ENCODE measurements at regions of chr17 and their contacts with region 1.

Region 1: DNA sequence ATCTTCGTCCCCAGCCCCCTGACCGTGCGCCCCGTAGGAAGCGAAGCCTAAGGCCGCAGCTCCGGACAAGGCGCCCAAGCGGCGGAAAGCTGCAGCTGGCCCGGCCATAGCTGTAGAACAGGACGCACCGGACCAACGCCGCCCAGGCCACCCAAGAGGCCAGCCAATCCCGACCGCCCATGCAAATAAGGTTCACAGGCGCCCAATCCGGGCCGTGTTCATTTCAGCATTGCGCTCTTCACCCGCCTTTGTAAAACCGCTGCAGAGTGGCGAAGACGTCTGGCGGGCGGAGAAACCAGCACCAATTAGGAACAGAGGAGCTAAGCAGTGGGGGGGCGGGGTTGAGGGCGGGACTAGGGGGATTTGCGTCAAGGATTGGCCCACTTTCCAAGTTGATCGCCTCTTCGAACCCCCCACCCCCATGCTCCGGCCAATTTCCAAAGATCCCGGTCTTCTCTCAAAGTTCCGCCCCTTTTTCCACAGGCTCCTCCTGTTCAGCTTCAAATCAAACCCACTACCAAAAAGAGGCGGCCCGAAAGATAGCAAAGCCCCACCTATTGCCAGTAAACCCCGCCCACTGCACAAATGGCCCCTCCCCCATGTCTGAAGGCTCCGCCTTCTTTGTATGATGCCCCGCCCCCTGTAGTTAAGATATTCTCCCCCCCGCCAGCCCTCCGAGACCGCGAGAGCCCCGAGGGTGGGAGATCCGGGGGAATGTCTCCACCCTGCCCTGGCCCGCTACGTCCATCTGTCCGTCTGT is at the start of gene TMEM256:
- DNase-seq: peak; percentile 98
- ATAC-seq: peak; percentile 95
- H3K4me3 ChIP-seq: peak within 1 kb of the TSS; percentile 76 to 95 (median 80)
- H3K27ac ChIP-seq: peak within 1 kb of the TSS; percentile 99
- H3K4me1 ChIP-seq: peaks cover 18% of the 10 kb centered on the region
- H3K27me3 ChIP-seq: no peaks in the 10 kb centered on the region; a peak in 2 of 5 replicates
- CTCF ChIP-seq: no peak
- EP300 ChIP-seq: peak in 1 of 2 experiments; percentile 34; a peak in 1 of 4 replicates
- POLR2A ChIP-seq: peak; percentile 94
- RAD21 ChIP-seq: no peak; the same call in 1 of the 2 replicates
- total RNA-seq, gene TMEM256: 231 and 246 TPM in 2 replicates

Region 2: DNA sequence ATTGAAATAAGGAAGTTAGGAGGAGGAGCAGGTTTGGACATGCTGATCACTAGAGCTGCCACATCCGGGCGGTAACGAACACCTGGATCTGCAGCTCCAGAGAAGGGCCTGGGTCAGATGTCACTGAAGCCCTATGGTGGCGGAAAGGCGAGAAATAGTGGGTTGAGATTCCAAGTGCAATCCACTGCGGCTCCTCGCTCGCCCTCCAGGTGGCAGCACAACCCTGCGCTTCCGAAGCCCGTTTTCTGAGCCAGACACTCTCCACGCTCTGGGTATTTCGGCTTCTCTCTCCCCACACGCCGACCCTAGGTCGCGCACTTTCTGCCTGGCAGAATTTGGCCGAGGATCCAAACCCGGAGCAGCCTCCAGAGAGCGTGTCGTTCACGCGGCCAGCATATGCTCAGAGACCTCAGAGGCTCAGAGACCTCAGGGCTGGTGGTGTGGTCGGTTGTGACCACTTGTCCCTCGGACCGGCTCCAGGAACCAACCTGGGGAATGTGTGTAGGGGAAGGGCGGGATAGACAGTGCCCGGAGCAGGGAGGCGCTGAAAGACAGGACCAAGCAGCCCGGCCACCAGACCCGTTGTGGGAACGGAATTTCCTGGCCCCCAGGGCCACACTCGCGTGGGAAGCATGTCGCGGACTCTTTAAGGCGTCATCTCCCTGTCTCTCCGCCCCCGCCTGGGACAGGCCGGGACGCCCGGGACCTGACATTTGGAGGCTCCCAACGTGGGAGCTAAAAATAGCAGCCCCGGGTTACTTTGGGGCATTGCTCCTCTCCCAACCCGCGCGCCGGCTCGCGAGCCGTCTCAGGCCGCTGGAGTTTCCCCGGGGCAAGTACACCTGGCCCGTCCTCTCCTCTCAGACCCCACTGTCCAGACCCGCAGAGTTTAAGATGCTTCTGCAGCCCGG is 123.4 kb before region 1 on chr17:
- CTCF ChIA-PET with region 1: no interaction called
- POLR2A ChIA-PET with region 1: interaction called, 13 read pairs
- in situ Hi-C with region 1: no loop called
- intact Hi-C with region 1: no loop called
- DNase-seq: peak; percentile 79
- ATAC-seq: peak; percentile 72
- H3K4me3 ChIP-seq: peak overlapping the region; percentile 23 to 87 (median 31); a peak in 5 of 6 replicates
- H3K27ac ChIP-seq: peak overlapping the region; percentile 59
- H3K4me1 ChIP-seq: peaks cover 38% of the 10 kb centered on the region
- H3K27me3 ChIP-seq: no peaks in the 10 kb centered on the region
- CTCF ChIP-seq: peak; percentile 98
- EP300 ChIP-seq: no peak
- POLR2A ChIP-seq: no peak
- RAD21 ChIP-seq: peak; percentile 99

Region 3: GRCh38 chr17:7380321-7380720 is 23.8 kb before region 1 on chr17:
- CTCF ChIA-PET with region 1: no interaction called
- POLR2A ChIA-PET with region 1: interaction called, 24 read pairs
- in situ Hi-C with region 1: no loop called
- intact Hi-C with region 1: no loop called
- DNase-seq: no peak
- ATAC-seq: peak; percentile 77
- H3K4me3 ChIP-seq: peak overlapping the region; percentile 62 to 83 (median 77)
- H3K27ac ChIP-seq: no peak overlapping the region
- H3K4me1 ChIP-seq: peaks cover 21% of the 10 kb centered on the region
- H3K27me3 ChIP-seq: peaks cover 0 to 7% of the 10 kb centered on the region in 2 experiments; a peak in 1 of 5 replicates
- CTCF ChIP-seq: peak; percentile 36
- EP300 ChIP-seq: no peak
- POLR2A ChIP-seq: no peak
- RAD21 ChIP-seq: no peak

Region 4: DNA sequence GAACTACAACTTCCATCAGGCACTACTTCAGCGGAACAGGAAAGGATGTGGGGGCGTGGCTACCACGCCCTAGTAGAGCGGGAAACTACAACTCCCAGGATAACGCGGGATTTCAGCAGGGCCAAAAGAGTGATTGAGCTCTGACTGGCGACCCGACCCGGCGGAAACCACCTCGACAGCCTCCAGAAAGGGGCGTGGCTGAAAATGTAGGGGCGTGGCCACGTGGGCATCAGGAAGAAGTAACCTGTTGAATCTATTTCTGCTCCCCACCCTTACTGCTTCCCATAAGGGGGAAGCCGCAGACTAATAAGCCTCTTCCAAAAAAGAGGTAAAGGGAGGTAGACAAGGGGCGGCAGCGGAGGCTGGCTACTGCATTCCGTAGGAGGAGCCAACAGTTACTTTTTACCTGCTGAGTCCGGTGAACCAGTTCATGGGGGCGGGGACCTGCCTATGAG is 31.1 kb after region 1 on chr17 and contains the start of gene TMEM102:
- CTCF ChIA-PET with region 1: no interaction called
- POLR2A ChIA-PET with region 1: interaction called, 52 read pairs
- in situ Hi-C with region 1: no loop called
- intact Hi-C with region 1: loop called (anchors 1 kb)
- DNase-seq: peak; percentile 97
- ATAC-seq: peak; percentile 85
- H3K4me3 ChIP-seq: peak within 1 kb of the TSS; percentile 62 to 75 (median 72)
- H3K27ac ChIP-seq: peak within 1 kb of the TSS; percentile 13
- H3K4me1 ChIP-seq: peaks cover 24% of the 10 kb centered on the region
- H3K27me3 ChIP-seq: no peaks in the 10 kb centered on the region; a peak in 1 of 5 replicates
- CTCF ChIP-seq: 0 out of 2 replicates have a peak, but pooled peaks have one; percentile 6
- EP300 ChIP-seq: no peak
- POLR2A ChIP-seq: no peak
- RAD21 ChIP-seq: no peak
- total RNA-seq, gene TMEM102: 2.0 and 3.1 TPM in 2 replicates

Region 5: DNA sequence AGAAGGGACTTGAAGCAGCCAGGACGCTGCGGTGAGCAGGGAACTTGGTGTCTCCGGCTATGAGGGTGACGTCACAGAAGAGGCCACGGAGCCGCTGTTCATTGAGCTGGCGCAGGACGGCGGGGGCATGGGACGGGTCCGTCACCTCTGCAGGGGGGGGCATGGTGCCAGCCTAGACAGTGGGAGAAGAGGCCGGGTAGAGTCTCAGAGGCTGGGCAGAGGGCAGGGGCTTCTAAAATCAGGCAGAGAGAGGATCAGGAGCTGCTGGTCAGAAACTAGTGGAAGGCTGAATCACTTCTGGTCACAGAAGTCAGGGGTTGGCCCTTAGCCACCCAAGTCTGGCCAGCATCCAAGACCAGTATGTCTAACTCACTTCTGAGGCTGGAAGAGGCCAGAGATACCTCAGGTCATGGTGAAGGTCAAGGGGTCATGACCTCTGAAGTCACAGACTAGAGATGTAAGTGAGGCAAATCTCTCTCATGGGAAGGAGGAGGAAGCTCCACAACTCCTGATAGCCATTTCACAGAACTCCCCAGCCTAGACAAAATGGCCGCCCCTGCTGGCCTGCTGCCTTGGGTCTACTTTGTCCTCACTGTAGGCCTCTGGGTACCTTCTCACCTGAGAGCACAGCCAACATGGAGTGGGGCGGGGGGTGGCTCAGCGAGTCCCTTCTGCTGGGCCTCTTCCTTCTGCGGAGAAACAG is 62.6 kb after region 1 on chr17:
- CTCF ChIA-PET with region 1: no interaction called
- POLR2A ChIA-PET with region 1: no interaction called
- in situ Hi-C with region 1: no loop called
- intact Hi-C with region 1: no loop called
- DNase-seq: no peak
- ATAC-seq: no peak
- H3K4me3 ChIP-seq: no peak overlapping the region
- H3K27ac ChIP-seq: no peak overlapping the region
- H3K4me1 ChIP-seq: peaks cover 26% of the 10 kb centered on the region
- H3K27me3 ChIP-seq: no peaks in the 10 kb centered on the region
- CTCF ChIP-seq: no peak
- EP300 ChIP-seq: no peak
- POLR2A ChIP-seq: no peak
- RAD21 ChIP-seq: no peak

Region 6: DNA sequence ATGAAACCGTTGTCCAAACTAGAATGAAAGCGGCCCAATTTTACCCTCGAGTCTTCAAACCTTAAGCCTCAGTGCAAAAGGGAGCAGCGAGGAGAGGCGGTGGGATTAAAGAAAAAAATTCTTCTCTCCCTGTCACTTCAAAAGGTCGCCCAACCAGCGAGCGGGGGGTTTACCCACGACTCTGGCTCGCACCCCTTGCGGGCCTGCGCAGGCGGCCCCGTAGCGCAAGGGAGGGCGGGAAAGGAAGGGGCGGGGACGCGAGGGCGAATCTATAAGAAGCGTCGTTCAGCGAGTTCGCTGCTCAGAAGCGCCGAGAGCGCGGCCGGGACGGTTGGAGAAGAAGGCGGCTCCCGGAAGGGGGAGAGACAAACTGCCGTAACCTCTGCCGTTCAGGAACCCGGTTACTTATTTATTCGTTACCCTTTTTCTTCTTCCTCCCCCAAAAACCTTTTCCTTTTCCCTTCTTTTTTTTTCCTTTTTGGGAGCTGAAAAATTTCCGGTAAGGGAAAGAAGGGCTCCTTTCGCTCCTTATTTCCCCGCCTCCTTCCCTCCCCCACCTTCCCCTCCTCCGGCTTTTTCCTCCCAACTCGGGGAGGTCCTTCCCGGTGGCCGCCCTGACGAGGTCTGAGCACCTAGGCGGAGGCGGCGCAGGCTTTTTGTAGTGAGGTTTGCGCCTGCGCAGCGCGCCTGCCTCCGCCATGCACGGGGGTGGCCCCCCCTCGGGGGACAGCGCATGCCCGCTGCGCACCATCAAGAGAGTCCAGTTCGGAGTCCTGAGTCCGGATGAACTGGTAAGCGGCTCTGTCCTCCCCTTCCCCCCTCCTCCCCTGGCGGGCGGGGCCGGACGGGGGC is 80.1 kb after region 1 on chr17 and contains the start of gene POLR2A:
- CTCF ChIA-PET with region 1: no interaction called
- POLR2A ChIA-PET with region 1: interaction called, 41 read pairs
- in situ Hi-C with region 1: no loop called
- intact Hi-C with region 1: loop called (anchors 5 kb)
- DNase-seq: peak; percentile 96
- ATAC-seq: peak; percentile 72
- H3K4me3 ChIP-seq: peak within 1 kb of the TSS; percentile 75 to 92 (median 90)
- H3K27ac ChIP-seq: peak within 1 kb of the TSS; percentile 100
- H3K4me1 ChIP-seq: peaks cover 65% of the 10 kb centered on the region
- H3K27me3 ChIP-seq: no peaks in the 10 kb centered on the region; a peak in 2 of 5 replicates
- CTCF ChIP-seq: no peak
- EP300 ChIP-seq: peak; percentile 44 to 51; a peak in 2 of 4 replicates
- POLR2A ChIP-seq: peak; percentile 100
- RAD21 ChIP-seq: peak; percentile 44; the same call in 1 of the 2 replicates
- total RNA-seq, gene POLR2A: 17.8 and 63.2 TPM in 2 replicates

Region 7: GRCh38 chr17:7687908-7688807 is 284.0 kb after region 1 on chr17 and contains the start of gene WRAP53:
- CTCF ChIA-PET with region 1: no interaction called
- POLR2A ChIA-PET with region 1: interaction called, 28 read pairs
- in situ Hi-C with region 1: no loop called
- intact Hi-C with region 1: no loop called
- DNase-seq: peak; percentile 98
- ATAC-seq: peak; percentile 90
- H3K4me3 ChIP-seq: peak within 1 kb of the TSS; percentile 93 to 98 (median 95)
- H3K27ac ChIP-seq: peak within 1 kb of the TSS; percentile 95
- H3K4me1 ChIP-seq: peaks cover 33% of the 10 kb centered on the region
- H3K27me3 ChIP-seq: no peaks in the 10 kb centered on the region; a peak in 1 of 5 replicates
- CTCF ChIP-seq: peak; percentile 94
- EP300 ChIP-seq: no peak
- POLR2A ChIP-seq: peak; percentile 79 to 83
- RAD21 ChIP-seq: peak; percentile 76
- total RNA-seq, gene WRAP53: 18.1 and 19.5 TPM in 2 replicates

Measured in HepG2 (cell line).